ENCODE measurements at regions of chr1 and their contacts with region 1.

Region 1: GRCh38 chr1:210584439-210585113 is 255.9 kb downstream of the HHAT start:
- DNase-seq: peak; percentile 54
- ATAC-seq: peak; percentile 99
- H3K4me3 ChIP-seq: no peak overlapping the region
- H3K27ac ChIP-seq: no peak overlapping the region
- H3K4me1 ChIP-seq: no peaks in the 10 kb centered on the region
- H3K27me3 ChIP-seq: peaks cover 17% of the 10 kb centered on the region; the same call in 1 of the 2 replicates
- CTCF ChIP-seq: peak; percentile 74 to 82 (median 76)
- POLR2A ChIP-seq: no peak
- RAD21 ChIP-seq: peak; percentile 92

Region 2: GRCh38 chr1:210407207-210407886 is 177.2 kb before region 1 on chr1:
- CTCF ChIA-PET with region 1: interaction called, 4 read pairs
- POLR2A ChIA-PET with region 1: no interaction called
- RAD21 ChIA-PET with region 1: no interaction called
- intact Hi-C with region 1: loop called (anchors 1 kb)
- DNase-seq: peak; percentile 27
- ATAC-seq: peak; percentile 92
- H3K4me3 ChIP-seq: no peak overlapping the region
- H3K27ac ChIP-seq: no peak overlapping the region
- H3K4me1 ChIP-seq: no peaks in the 10 kb centered on the region
- H3K27me3 ChIP-seq: no peaks in the 10 kb centered on the region
- CTCF ChIP-seq: peak; percentile 73 to 97 (median 88)
- POLR2A ChIP-seq: no peak
- RAD21 ChIP-seq: peak; percentile 91

Region 3: DNA sequence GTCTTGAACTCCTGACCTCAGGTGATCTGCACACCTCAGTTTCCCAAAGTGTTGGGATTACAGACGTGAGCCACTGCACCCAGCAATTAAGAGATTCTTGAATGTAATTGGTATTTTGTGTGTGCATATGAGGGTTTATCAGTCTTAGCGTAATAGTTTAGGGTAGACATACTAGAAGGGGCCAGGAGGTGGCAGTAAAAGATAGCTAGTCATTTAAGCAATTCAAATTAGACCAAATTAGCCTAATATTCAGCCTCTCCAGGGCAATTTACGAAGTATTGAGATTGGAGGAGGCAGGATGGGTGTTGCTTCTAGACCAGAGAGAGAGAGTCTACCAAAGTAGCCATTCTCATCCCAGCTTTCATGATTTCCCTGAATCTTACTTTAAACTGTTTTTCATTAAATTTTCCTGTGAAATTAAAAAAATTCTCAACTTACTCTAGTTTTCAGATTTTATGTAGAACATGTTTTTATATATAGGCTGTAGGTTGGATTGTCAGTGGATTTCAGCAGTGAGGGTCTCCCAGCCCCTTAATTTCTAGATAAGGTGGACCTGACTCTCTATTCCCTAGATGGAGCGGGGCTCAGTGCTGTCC is 136.2 kb before region 1 on chr1:
- CTCF ChIA-PET with region 1: interaction called, 3 read pairs
- POLR2A ChIA-PET with region 1: no interaction called
- RAD21 ChIA-PET with region 1: no interaction called
- intact Hi-C with region 1: loop called (anchors 5 kb)
- DNase-seq: peak; percentile 33
- ATAC-seq: peak; percentile 87
- H3K4me3 ChIP-seq: no peak overlapping the region
- H3K27ac ChIP-seq: no peak overlapping the region
- H3K4me1 ChIP-seq: peaks cover 4% of the 10 kb centered on the region in 2 experiments; a peak in 2 of 4 replicates
- H3K27me3 ChIP-seq: peaks cover 34% of the 10 kb centered on the region
- CTCF ChIP-seq: peak; percentile 56 to 73 (median 59); a peak in 5 of 6 replicates
- POLR2A ChIP-seq: no peak
- RAD21 ChIP-seq: peak; percentile 79

Region 4: GRCh38 chr1:210707300-210708240 is 123.0 kb after region 1 on chr1:
- CTCF ChIA-PET with region 1: no interaction called
- POLR2A ChIA-PET with region 1: no interaction called
- RAD21 ChIA-PET with region 1: no interaction called
- intact Hi-C with region 1: no loop called
- DNase-seq: no peak
- ATAC-seq: no peak
- H3K4me3 ChIP-seq: no peak overlapping the region
- H3K27ac ChIP-seq: no peak overlapping the region
- H3K4me1 ChIP-seq: no peaks in the 10 kb centered on the region
- H3K27me3 ChIP-seq: peaks cover 34% of the 10 kb centered on the region
- CTCF ChIP-seq: no peak
- POLR2A ChIP-seq: no peak
- RAD21 ChIP-seq: no peak

Region 5: DNA sequence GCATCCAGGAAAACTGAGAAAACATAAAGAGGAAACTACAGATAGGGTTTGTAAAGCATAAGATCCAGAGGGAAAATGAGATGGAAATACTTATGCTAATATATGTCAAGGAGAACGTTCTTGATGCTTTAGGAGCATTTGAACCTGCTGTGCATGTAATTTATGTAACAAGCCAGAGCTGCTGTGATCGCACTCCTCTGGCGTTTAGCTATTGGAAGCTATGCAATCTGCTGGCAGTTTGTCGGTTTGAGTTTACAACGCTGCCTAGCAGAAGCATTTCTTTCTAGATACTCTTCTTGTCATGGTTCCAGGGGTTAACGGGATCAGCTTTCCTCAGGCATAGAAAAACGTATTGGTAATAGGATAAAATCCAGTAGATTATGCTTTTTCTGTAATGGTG is 366.7 kb after region 1 on chr1:
- CTCF ChIA-PET with region 1: no interaction called
- POLR2A ChIA-PET with region 1: no interaction called
- RAD21 ChIA-PET with region 1: no interaction called
- intact Hi-C with region 1: loop called (anchors 1 kb)
- DNase-seq: no peak
- ATAC-seq: no peak
- H3K4me3 ChIP-seq: no peak overlapping the region
- H3K27ac ChIP-seq: no peak overlapping the region
- H3K4me1 ChIP-seq: no peaks in the 10 kb centered on the region
- H3K27me3 ChIP-seq: peaks cover 13% of the 10 kb centered on the region; the same call in 1 of the 2 replicates
- CTCF ChIP-seq: no peak
- POLR2A ChIP-seq: no peak
- RAD21 ChIP-seq: no peak

Region 6: GRCh38 chr1:211133836-211134669 is 549.5 kb after region 1 on chr1 and contains the start of gene KCNH1:
- CTCF ChIA-PET with region 1: interaction called, 44 read pairs
- POLR2A ChIA-PET with region 1: no interaction called
- RAD21 ChIA-PET with region 1: interaction called in 1 of 2 experiments, 3 read pairs
- intact Hi-C with region 1: loop called (anchors 1 kb)
- DNase-seq: peak; percentile 46
- ATAC-seq: peak; percentile 91
- H3K4me3 ChIP-seq: no peak within 1 kb of the TSS
- H3K27ac ChIP-seq: no peak within 1 kb of the TSS
- H3K4me1 ChIP-seq: peaks cover 0 to 4% of the 10 kb centered on the region in 2 experiments; a peak in 2 of 4 replicates
- H3K27me3 ChIP-seq: peaks cover 66% of the 10 kb centered on the region
- CTCF ChIP-seq: peak; percentile 78 to 97 (median 90)
- POLR2A ChIP-seq: no peak
- RAD21 ChIP-seq: peak; percentile 94
- total RNA-seq, gene KCNH1: not detected

Region 7: GRCh38 chr1:211476200-211476849 is 891.7 kb after region 1 on chr1:
- CTCF ChIA-PET with region 1: no interaction called
- POLR2A ChIA-PET with region 1: no interaction called
- RAD21 ChIA-PET with region 1: no interaction called
- intact Hi-C with region 1: loop called (anchors 10 kb)
- DNase-seq: peak; percentile 51
- ATAC-seq: peak; percentile 95
- H3K4me3 ChIP-seq: no peak overlapping the region
- H3K27ac ChIP-seq: no peak overlapping the region
- H3K4me1 ChIP-seq: no peaks in the 10 kb centered on the region
- H3K27me3 ChIP-seq: no peaks in the 10 kb centered on the region
- CTCF ChIP-seq: peak; percentile 74 to 90 (median 83)
- POLR2A ChIP-seq: no peak
- RAD21 ChIP-seq: peak; percentile 68

Measured in HCT116 (cell line).